Activated CD4-positive, alpha-beta T cell treated with anti-CD3 and anti-CD28 coated beads, Interleukin-2, amount 10 ng/mL, durations not matched to agents 24 days and 14 days (primary cell): ENCODE measurements at regions of chr19 and their contacts with region 1.

Region 1: DNA sequence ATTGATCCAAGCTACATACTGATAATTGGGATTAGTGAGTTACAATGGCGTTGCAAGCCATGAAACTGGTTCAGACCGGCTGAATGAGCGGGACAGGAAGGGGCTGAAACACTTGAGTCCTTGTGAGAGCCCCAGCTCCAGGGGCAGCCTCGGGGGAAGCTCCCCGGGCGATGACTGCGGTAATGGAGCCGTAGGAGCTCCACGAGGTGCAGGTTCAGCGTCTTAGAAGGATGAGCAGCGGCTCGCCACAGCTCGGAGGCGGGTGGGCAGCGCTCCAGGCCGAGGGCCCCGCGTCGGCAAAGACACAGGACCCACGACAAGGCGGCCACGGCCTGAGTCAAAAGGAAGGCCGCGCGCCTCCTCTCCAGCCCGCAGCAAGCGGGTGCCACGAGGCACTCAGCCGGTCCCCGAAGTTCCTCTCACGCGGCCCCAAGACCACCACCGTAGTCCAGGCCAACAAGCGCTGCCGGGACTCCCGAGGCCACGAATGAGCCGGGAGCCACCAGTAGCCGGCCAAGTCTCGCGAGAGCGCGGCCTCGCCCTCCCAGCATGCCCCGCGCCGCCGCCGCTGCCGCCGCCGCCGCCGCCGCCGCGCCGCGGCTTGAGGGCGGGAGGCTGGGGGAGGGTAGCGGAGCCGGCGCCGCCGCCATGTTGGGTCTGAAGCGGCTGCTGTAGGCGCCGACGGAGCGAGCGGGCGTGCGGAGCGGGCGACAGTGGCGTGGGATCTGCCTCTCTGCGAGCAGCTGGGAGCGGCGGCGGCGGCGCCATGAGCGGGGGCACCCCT is at the start of gene LSM14A:
- DNase-seq: peak; percentile 98
- H3K4me3 Mint-ChIP-seq: peak within 1 kb of the TSS; percentile 85
- H3K27ac Mint-ChIP-seq: peak within 1 kb of the TSS; percentile 99
- H3K4me1 Mint-ChIP-seq: peaks cover 37% of the 10 kb centered on the region
- H3K27me3 Mint-ChIP-seq: peaks cover 2% of the 10 kb centered on the region
- total RNA-seq, gene LSM14A: 105 and 117 TPM in 2 replicates

Region 2: DNA sequence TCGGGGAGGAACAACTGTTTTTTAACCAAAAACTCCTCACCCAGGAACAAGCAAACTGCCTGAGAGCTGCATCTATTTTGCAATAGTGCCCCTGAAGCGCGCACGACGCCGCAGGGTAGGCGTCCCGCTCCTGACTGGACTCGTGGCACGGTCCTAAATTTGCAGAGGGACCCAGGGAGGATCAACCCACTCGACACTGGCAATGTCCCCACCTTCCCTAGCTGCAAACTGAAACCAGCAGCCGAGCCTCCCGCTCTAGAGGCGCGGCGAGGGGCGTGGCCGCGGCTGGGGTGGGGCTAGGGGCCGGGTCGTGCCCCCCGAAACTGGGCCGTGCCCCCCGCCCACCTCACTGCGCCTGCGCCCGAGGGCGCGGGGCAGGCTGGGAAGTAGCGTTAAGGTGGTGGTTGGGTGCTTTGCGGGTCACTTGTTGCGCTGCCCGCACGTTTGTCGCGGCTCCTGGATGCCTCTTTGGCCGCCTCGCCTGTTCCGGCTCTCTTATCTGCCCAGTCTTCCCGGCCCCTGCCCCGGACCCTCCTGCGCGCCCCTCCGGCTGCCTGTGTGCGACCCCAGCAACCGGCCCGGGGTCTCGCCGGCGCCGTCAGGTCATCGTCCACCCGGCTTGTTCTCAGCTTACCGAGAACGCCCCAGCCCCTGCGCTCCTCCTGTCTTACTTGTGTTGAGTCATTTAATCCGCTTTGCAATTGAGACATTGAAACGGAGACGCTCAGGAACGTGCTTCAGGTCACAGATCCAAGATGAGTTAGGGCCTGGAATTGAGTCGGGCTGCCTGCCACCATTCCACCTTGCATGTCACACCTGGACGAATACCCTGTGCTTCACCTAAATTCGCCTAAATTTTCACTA is 37.6 kb before region 1 on chr19:
- intact Hi-C with region 1: loop called (anchors 1 kb)
- DNase-seq: peak; percentile 97
- H3K4me3 Mint-ChIP-seq: peak overlapping the region; percentile 94
- H3K27ac Mint-ChIP-seq: peak overlapping the region; percentile 92
- H3K4me1 Mint-ChIP-seq: peaks cover 14% of the 10 kb centered on the region
- H3K27me3 Mint-ChIP-seq: peaks cover 4% of the 10 kb centered on the region

Region 3: GRCh38 chr19:34217952-34218817 is 46.1 kb after region 1 on chr19:
- intact Hi-C with region 1: loop called (anchors 1 kb)
- DNase-seq: peak; percentile 86
- H3K4me3 Mint-ChIP-seq: peak overlapping the region; percentile 34
- H3K27ac Mint-ChIP-seq: peak overlapping the region; percentile 76
- H3K4me1 Mint-ChIP-seq: peaks cover 26% of the 10 kb centered on the region
- H3K27me3 Mint-ChIP-seq: no peaks in the 10 kb centered on the region

Region 4: DNA sequence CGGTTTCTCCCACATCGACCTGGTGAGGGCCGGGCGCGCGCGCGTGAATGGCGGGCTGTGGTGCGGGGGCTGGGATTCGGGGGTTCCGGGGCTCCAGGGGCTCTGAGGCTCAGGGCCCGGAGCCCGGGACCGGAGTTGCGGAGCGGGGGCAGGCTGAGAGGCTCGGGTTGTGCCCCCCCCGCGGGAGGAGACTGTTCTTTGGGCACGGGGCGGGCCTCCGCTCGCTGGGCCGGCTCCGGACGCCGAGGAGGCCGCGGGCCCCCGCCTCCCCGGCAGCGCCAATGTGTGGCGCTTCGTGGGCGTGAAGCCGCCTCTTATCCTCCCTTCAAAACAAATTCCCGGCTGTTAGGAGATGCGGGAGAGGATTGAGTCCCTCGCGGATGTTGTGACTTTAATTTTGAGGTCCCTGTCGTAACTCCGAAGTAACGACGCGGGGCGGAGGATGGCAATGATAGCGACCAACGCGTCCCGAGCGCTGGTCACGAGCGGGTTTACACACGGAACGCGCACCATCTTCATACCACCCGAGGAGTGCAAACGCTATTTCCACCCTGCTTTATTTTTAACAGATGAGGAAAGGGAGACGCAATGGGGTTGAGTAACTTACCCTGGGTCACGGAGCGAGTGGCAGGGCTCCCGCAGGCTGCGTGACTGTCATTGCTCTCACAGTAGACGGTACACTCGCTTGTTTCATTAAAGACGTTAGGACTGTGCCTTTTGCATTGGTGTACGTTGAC is 256.6 kb after region 1 on chr19:
- intact Hi-C with region 1: loop called (anchors 1 kb)
- DNase-seq: peak; percentile 85
- H3K4me3 Mint-ChIP-seq: peak overlapping the region; percentile 97
- H3K27ac Mint-ChIP-seq: peak overlapping the region; percentile 93
- H3K4me1 Mint-ChIP-seq: peaks cover 28% of the 10 kb centered on the region
- H3K27me3 Mint-ChIP-seq: no peaks in the 10 kb centered on the region